Ovary (tissue), 10 donors: ENCODE measurements at regions of chr18 and their contacts with region 1.

Region 1: DNA sequence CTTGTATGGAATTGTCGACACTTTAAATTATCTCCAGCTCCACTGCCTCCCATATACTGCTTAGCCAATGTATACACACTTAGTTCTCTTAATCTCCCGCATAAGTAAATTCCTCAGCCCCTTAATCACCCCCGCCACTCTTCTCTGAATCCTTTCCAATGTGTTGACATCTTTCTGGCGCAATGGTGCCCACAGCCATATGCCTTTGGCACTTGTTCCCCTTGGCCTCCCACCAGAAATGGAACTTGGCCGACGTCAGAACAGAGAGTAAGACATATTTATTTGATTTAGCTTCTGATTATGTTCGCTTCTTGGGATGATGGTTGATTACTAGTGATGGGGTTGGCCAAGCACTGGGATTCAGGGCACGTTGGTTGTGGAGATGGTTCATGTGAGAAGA is 1089.3 kb upstream of the CELF4 start:
- DNase-seq: no peak
- H3K4me3 ChIP-seq: no peak overlapping the region
- H3K27ac ChIP-seq: no peak overlapping the region
- H3K4me1 ChIP-seq: no peaks in the 10 kb centered on the region
- H3K27me3 ChIP-seq: no peaks in the 10 kb centered on the region
- CTCF ChIP-seq: no peak
- EP300 ChIP-seq: no peak
- POLR2A ChIP-seq: no peak

Region 2: DNA sequence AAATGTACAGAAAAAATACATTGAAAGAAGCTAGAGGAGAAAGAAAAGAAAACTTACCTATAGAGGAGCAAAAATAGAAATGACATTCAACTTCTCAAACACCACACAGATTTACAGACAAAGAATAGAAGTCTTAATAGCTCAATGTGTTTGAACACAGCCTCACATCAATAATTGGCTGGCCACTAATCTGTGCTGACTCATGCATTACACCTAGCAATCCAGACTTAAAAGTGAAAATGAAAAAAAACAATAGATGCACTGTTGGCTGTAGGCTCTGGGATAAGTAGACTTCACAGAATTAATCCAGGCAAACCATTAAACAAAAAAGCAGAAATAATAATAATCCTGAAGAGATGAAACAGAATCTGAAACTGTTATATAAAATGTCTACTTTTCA is 128.0 kb before region 1 on chr18:
- intact Hi-C with region 1: no loop called
- DNase-seq: no peak
- H3K4me3 ChIP-seq: no peak overlapping the region
- H3K27ac ChIP-seq: no peak overlapping the region
- H3K4me1 ChIP-seq: no peaks in the 10 kb centered on the region
- H3K27me3 ChIP-seq: no peaks in the 10 kb centered on the region
- CTCF ChIP-seq: no peak
- EP300 ChIP-seq: no peak
- POLR2A ChIP-seq: no peak

Region 3: DNA sequence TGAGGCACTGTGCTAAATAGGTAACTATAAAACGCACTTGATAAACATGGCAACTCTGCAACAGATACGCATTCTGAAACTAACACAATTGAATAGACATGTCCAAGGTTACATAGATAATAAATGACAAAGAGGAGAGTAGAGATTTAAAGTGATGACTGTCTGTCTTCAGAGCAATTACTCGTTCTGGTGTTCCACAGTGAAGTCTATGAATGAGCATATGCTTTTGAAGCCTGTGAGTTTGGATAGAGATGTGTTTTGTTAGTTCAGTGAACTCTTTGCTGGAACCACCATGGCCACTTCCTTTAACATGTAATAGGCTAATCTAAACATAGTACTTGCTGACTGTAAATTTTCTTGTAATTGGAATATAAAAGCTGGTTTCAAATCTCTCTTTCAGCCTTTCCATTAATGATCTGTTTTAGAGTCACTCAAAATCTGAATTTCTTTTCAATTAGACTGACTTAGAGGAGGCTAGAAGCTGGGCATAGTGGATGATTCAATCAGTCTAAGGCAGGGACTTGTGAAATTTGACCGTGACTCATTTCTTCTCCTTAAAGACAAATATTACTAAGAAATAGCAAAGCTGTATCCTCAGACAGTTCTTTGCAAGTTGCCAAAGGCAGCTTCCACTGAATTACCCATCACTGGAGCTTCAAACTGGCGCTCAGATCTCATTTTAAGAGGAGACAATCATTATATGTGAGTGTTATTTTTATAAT is 40.8 kb after region 1 on chr18:
- intact Hi-C with region 1: no loop called
- DNase-seq: no peak
- H3K4me3 ChIP-seq: no peak overlapping the region
- H3K27ac ChIP-seq: no peak overlapping the region
- H3K4me1 ChIP-seq: no peaks in the 10 kb centered on the region
- H3K27me3 ChIP-seq: no peaks in the 10 kb centered on the region
- CTCF ChIP-seq: no peak
- EP300 ChIP-seq: no peak
- POLR2A ChIP-seq: no peak

Region 4: GRCh38 chr18:38718365-38718901 is 63.5 kb after region 1 on chr18:
- intact Hi-C with region 1: loop called in 1 of 4 experiments (anchors 10 kb)
- DNase-seq: no peak
- H3K4me3 ChIP-seq: no peak overlapping the region
- H3K27ac ChIP-seq: no peak overlapping the region
- H3K4me1 ChIP-seq: no peaks in the 10 kb centered on the region
- H3K27me3 ChIP-seq: no peaks in the 10 kb centered on the region
- CTCF ChIP-seq: no peak
- EP300 ChIP-seq: no peak
- POLR2A ChIP-seq: no peak